Heart left ventricle (tissue), 16 donors: ENCODE measurements at regions of chr5 and their contacts with region 1.

Region 1: DNA sequence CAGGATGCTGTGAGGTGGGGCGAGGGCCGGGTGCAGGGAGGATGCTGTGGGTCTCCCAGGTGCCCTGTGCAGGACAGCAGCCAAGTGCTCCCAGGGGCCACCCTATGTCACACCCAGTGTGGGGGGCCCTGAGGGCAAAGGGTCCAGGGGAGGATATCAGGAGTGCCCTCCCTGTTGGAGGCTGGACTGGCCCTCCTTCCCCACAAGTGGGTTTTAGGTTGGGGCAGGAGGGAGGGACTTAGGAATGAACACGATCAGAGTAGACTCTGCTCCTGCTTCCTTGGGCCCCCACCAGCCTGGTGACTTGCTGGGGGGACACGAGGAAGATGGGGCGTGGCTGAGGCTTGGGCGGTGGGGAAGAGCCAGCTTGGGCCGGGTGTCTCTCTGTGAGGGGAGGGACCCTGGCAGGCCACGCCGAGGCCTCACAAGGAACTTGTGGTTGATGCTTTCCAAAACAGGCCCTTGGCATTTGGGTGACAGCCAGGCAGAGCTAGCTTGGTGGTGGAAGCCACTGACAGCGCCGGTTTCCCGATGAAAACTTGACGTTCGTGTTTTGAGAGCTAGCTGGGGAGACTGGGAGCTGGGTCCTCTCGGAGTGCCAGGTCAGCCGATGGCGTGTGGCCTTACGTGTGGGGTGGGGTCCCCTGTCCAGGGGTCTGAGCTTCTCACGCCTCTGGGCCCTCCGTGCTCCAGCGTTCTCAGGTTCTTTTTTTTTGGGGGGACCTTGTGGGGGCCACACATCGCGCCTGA is 129.0 kb upstream of the LPCAT1 start:
- DNase-seq: peak in 2 of 5 donors; percentile 14 to 47
- ATAC-seq: peak in 2 of 4 donors; percentile 25 to 29
- H3K4me3 ChIP-seq: no peak overlapping the region
- H3K27ac ChIP-seq: no peak overlapping the region
- H3K4me1 ChIP-seq: peaks cover 0 to 10% (median 4%) of the 10 kb centered on the region in 12 donors
- H3K27me3 ChIP-seq: peaks cover 0 to 58% (median 23%) of the 10 kb centered on the region in 9 donors
- CTCF ChIP-seq: no peak
- POLR2A ChIP-seq: no peak

Region 2: GRCh38 chr5:1174122-1174936 is 478.4 kb before region 1 on chr5:
- intact Hi-C with region 1: loop called in 3 of 10 experiments (anchors 5 to 10 kb)
- DNase-seq: peak; percentile 53 to 77 (median 66)
- ATAC-seq: peak; percentile 55 to 76 (median 64)
- H3K4me3 ChIP-seq: no peak overlapping the region
- H3K27ac ChIP-seq: no peak overlapping the region
- H3K4me1 ChIP-seq: peaks cover 0 to 5% (median 0%) of the 10 kb centered on the region in 12 donors
- H3K27me3 ChIP-seq: no peaks in the 10 kb centered on the region
- CTCF ChIP-seq: peak; percentile 63 to 85 (median 74)
- POLR2A ChIP-seq: no peak

Region 3: GRCh38 chr5:1724822-1725643 is 72.3 kb after region 1 on chr5:
- intact Hi-C with region 1: no loop called
- DNase-seq: no peak
- ATAC-seq: peak in 1 of 4 donors; percentile 13
- H3K4me3 ChIP-seq: peak overlapping the region in 3 of 12 donors; percentile 9 to 33 (median 10)
- H3K27ac ChIP-seq: no peak overlapping the region
- H3K4me1 ChIP-seq: no peaks in the 10 kb centered on the region
- H3K27me3 ChIP-seq: peaks cover 0 to 22% (median 0%) of the 10 kb centered on the region in 9 donors
- CTCF ChIP-seq: no peak
- POLR2A ChIP-seq: no peak